ENCODE measurements at regions of chr22 and their contacts with region 1.

Region 1: DNA sequence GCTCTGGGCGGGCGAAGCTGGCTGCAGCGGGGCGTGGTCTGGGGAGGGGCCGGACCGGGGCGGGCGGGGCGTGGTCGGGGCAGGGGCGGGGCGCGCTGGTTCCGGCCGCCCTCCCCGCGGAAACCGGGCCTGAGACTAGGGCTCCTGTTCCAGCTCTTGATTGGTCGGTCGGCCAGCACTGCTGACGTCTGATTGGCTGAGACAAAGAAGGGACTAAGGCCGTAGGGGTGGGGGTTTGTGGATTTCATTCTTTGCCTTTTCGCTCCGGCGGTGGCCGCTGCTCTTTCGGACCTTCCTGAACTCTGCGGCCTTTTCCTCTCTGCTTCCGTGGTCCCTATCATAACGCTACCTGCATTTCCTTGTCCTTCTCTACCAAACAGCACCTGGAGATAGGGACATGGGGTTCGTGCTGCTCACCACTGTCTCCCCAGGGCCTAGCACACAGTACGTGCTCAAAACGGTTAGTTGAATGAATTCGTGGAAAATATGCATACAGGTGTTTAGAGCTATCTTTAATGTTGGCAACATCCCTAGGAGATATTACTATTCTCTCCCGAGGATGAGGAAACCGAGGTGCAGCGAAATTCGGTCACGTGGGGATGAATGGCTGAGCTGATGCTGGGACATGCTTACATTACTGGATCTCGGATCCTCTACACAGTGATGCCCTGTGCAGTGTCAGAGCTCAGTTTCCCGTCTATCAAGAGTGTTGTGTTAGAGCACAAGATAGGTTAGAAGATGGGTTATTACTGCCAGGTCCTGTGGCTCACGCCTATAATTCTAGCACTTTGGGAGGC is 62.8 kb downstream of the NFAM1 start:
- DNase-seq: peak in 1 of 2 donors; percentile 97
- H3K4me3 ChIP-seq: peak overlapping the region; percentile 65 to 83
- H3K27ac ChIP-seq: peak overlapping the region; percentile 74
- H3K4me1 ChIP-seq: peaks cover 48% of the 10 kb centered on the region
- H3K27me3 ChIP-seq: no peaks in the 10 kb centered on the region
- CTCF ChIP-seq: no peak
- POLR2A ChIP-seq: no peak

Region 2: GRCh38 chr22:42070517-42071422 is 298.7 kb before region 1 on chr22 and contains the start of gene NAGA:
- intact Hi-C with region 1: no loop called
- DNase-seq: peak in 1 of 2 donors; percentile 96
- H3K4me3 ChIP-seq: peak within 1 kb of the TSS; percentile 64 to 66
- H3K27ac ChIP-seq: peak within 1 kb of the TSS; percentile 86
- H3K4me1 ChIP-seq: peaks cover 44% of the 10 kb centered on the region
- H3K27me3 ChIP-seq: no peaks in the 10 kb centered on the region
- CTCF ChIP-seq: no peak
- POLR2A ChIP-seq: peak in 1 of 2 donors; percentile 64
- total RNA-seq, gene NAGA: 28.2 TPM

Region 3: GRCh38 chr22:42270512-42271417 is 98.7 kb before region 1 on chr22 and contains the start of gene TCF20:
- intact Hi-C with region 1: loop called (anchors 10 kb)
- DNase-seq: peak in 1 of 2 donors; percentile 72
- H3K4me3 ChIP-seq: peak within 1 kb of the TSS; percentile 95 to 100
- H3K27ac ChIP-seq: peak within 1 kb of the TSS; percentile 95
- H3K4me1 ChIP-seq: peaks cover 47% of the 10 kb centered on the region
- H3K27me3 ChIP-seq: no peaks in the 10 kb centered on the region
- CTCF ChIP-seq: no peak
- POLR2A ChIP-seq: no peak
- total RNA-seq, gene TCF20: 30.4 TPM

Region 4: GRCh38 chr22:42432020-42432596 is 62.7 kb after region 1 on chr22 and contains the start of gene NFAM1:
- intact Hi-C with region 1: loop called (anchors 5 kb)
- DNase-seq: no peak
- H3K4me3 ChIP-seq: peak within 1 kb of the TSS; percentile 0 to 3
- H3K27ac ChIP-seq: no peak within 1 kb of the TSS
- H3K4me1 ChIP-seq: peaks cover 32% of the 10 kb centered on the region
- H3K27me3 ChIP-seq: no peaks in the 10 kb centered on the region
- CTCF ChIP-seq: no peak
- POLR2A ChIP-seq: no peak
- total RNA-seq, gene NFAM1: 1.7 TPM

Measured in vagina (tissue), 2 donors.